Activated T-helper 1 cell treated with anti-CD3 and anti-CD28 coated beads, Interleukin-12 subunit alpha, Interleukin-12 subunit beta, Interleukin-2, Interleukin-4 antibody, amounts not matched to agents 30 ng/mL and 10 ng/mL and 1 ng/mL, durations not matched to agents 14 hours and 24 hours and 36 hours (primary cell): ENCODE measurements at regions of chr11 and their contacts with region 1.

Region 1: GRCh38 chr11:9265211-9266131 is at the start of gene DENND5A:
- DNase-seq: peak; percentile 36
- H3K4me3 Mint-ChIP-seq: peak within 1 kb of the TSS; percentile 82
- H3K27ac Mint-ChIP-seq: peak within 1 kb of the TSS; percentile 80
- H3K4me1 Mint-ChIP-seq: peaks cover 33% of the 10 kb centered on the region
- H3K27me3 Mint-ChIP-seq: peaks cover 35% of the 10 kb centered on the region
- total RNA-seq, gene DENND5A: 45.6 and 47.6 TPM in 2 replicates

Region 2: DNA sequence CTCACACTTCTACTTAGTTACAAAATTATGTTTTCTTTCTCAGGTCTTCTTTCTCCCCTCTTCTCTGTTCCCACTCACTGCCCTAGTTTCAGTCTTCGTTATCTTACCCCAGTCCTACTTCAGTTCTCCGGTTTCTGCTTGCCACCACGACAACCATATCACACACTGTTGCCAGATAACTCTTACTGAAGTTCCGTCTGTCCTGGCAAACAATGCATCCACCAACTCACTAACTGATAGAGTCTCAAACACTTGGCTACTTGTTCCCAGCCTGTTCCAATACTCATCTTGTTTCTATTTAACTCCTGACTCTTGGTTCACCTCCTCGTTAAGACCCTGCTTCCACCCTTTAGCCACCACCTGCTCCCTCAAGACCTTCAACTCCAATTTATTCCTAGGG is 836.0 kb before region 1 on chr11:
- intact Hi-C with region 1: no loop called
- DNase-seq: no peak
- H3K4me3 Mint-ChIP-seq: no peak overlapping the region
- H3K27ac Mint-ChIP-seq: no peak overlapping the region
- H3K4me1 Mint-ChIP-seq: no peaks in the 10 kb centered on the region
- H3K27me3 Mint-ChIP-seq: no peaks in the 10 kb centered on the region

Region 3: DNA sequence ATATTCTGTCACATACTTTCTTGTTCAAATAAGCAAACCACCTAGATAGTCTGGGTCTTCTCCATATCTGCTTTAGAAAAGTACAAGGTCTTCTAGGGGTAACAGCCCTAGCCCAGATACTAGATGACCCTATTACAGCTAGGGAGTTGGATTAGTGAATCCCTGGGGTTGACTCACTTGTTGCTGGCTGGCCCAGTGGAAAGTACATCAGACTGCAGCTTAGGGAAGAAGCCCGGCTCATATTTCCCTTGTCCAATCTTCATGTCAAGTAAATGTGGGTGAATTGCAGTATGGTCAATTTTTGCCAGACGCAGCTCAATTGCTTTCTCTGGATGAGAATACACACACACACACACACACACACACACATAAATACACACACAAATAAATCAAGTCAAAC is 95.0 kb before region 1 on chr11:
- intact Hi-C with region 1: loop called (anchors 1 kb)
- DNase-seq: no peak
- H3K4me3 Mint-ChIP-seq: no peak overlapping the region
- H3K27ac Mint-ChIP-seq: no peak overlapping the region
- H3K4me1 Mint-ChIP-seq: peaks cover 10% of the 10 kb centered on the region
- H3K27me3 Mint-ChIP-seq: no peaks in the 10 kb centered on the region

Region 4: GRCh38 chr11:9250139-9250582 is 15.3 kb before region 1 on chr11:
- intact Hi-C with region 1: loop called (anchors 1 kb)
- DNase-seq: peak; percentile 36
- H3K4me3 Mint-ChIP-seq: peak overlapping the region; percentile 38
- H3K27ac Mint-ChIP-seq: peak overlapping the region; percentile 50
- H3K4me1 Mint-ChIP-seq: peaks cover 61% of the 10 kb centered on the region
- H3K27me3 Mint-ChIP-seq: peaks cover 1% of the 10 kb centered on the region

Region 5: GRCh38 chr11:9384535-9385303 is 119.2 kb after region 1 on chr11 and contains the start of gene IPO7:
- intact Hi-C with region 1: loop called (anchors 1 kb)
- DNase-seq: peak; percentile 87
- H3K4me3 Mint-ChIP-seq: peak within 1 kb of the TSS; percentile 96
- H3K27ac Mint-ChIP-seq: peak within 1 kb of the TSS; percentile 95
- H3K4me1 Mint-ChIP-seq: peaks cover 36% of the 10 kb centered on the region
- H3K27me3 Mint-ChIP-seq: no peaks in the 10 kb centered on the region
- total RNA-seq, gene IPO7: 136 and 153 TPM in 2 replicates

Region 6: DNA sequence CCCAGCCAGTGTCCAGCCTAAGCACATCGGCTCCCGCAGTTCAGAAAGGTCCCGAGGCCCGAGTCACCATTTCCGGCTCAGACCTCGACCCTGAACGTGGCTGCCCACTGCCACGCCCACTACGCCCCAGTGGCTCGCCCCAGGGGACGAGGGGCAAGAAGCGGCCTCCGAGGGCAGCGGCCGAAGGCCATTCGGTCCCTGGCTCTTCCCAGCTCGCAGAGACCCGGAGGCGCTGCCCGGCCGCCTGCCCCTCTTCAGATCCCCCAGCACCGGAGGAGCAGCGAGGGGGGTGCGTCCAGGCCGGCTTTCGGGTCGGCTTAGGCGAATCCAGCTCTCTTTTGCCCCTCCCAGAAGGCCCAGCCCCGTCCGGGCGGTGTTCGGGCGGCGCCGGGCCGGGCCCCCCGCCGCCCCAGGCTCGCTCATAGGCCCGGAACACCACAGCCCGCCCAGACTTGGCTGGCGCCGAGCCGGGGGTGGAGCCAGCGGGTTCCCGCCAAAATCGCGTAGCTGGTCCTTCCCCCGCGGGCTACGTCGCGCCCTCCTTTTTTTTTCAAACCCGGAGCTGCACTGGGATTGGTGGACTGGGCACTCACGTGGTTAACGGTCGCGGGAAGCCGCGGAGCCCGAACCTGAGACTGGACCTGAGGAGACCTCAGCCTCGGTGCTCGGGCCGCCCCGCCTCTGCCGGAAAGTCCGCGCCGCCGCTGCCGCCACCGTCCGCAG is 307.7 kb after region 1 on chr11 and contains the start of gene WEE1:
- intact Hi-C with region 1: loop called (anchors 2 kb)
- DNase-seq: peak; percentile 99
- H3K4me3 Mint-ChIP-seq: peak within 1 kb of the TSS; percentile 93
- H3K27ac Mint-ChIP-seq: peak within 1 kb of the TSS; percentile 88
- H3K4me1 Mint-ChIP-seq: peaks cover 42% of the 10 kb centered on the region
- H3K27me3 Mint-ChIP-seq: peaks cover 7% of the 10 kb centered on the region
- total RNA-seq, gene WEE1: 51.4 and 54.2 TPM in 2 replicates

Region 7: GRCh38 chr11:9765320-9766020 is 500.0 kb after region 1 on chr11:
- intact Hi-C with region 1: no loop called
- DNase-seq: no peak
- H3K4me3 Mint-ChIP-seq: no peak overlapping the region
- H3K27ac Mint-ChIP-seq: no peak overlapping the region
- H3K4me1 Mint-ChIP-seq: peaks cover 17% of the 10 kb centered on the region
- H3K27me3 Mint-ChIP-seq: no peaks in the 10 kb centered on the region